BJ (cell line): ENCODE measurements at regions of chr9 and their contacts with region 1.

Region 1: GRCh38 chr9:125241863-125242739 is 958 bp upstream of the HSPA5 start:
- DNase-seq: no peak
- H3K4me3 ChIP-seq: peak overlapping the region; percentile 52
- H3K27me3 ChIP-seq: no peaks in the 10 kb centered on the region
- CTCF ChIP-seq: no peak

Region 2: DNA sequence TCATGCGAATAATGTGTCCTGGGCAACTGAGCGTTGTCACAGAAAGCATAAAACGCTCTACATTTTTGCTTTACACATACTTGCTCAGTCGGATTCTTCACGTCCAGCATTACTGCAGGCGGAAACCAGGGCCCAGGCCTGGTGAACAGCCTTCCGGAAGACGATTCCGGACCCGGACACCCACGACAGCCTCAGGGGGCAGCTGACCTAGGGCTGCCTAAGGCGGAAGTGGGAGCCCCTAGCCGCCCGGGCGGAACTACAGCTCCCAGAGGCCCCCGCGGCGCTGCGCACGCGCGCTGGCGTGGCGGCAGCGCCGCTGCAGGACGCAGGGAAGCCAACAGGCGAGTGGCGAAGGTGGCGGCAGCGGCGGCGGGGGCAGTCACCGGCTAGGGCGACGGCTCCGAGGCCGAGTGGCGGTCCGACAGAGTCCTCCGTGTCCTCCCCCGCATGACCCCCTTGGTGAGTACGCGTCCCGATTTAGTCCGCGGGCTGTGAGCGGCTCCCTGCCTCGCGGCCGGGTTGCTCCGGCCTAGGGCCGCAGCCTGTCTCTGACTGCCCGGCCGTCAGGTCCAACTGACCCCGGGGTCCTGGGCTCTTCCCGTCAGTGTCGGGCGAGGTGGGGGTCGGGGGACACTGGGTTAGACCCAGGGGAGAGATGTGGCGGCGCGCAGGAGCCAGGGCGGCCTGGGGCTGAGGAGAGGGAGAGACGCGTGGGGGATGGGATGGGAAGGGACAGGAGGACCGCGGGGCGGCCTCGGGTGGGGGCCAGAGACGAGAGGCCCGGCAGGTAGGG is 19.6 kb after region 1 on chr9 and contains the start of gene GAPVD1:
- CTCF ChIA-PET with region 1: interaction called, 20 read pairs
- POLR2A ChIA-PET with region 1: interaction called, 3 read pairs
- DNase-seq: peak; percentile 50
- H3K4me3 ChIP-seq: peak within 1 kb of the TSS; percentile 84
- H3K27me3 ChIP-seq: no peaks in the 10 kb centered on the region
- CTCF ChIP-seq: peak; percentile 20; the same call in 1 of the 2 replicates
- polyA plus RNA-seq, gene GAPVD1: 11.6 and 15.8 TPM in 2 replicates

Region 3: DNA sequence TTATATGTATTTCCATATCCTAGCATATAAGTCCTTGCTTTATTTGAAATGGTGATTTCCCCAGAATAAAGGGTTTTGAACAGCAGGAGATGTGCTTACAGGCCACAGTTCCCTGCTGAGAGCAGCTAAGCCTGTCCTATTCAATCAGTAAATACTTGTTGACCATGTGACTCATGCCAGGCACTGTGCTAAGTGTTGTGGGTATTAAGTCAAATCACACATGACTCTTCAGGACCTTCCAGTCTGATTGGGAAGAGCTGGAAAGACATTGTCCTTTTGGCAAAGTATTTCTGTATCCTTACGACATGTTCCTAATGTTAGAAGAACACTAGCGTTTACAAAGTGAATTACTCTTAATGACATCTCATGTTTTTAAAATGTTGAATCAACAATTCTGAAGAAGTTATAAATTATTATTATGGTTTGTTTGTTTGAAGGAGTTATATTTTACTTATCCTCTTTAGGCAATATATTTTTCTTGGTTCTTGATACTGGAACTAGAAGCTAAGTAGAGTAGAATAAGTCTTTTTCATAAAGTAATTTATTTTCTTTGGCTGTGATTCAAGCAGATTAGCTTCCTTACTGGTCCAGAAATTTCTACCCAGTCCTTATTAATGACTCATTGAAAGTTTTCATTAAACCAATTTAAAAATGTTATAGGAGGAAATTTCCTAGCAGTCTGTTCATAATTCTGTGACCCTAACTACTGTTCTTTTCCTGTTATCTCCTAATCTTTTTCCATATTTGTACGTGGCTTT is 101.6 kb after region 1 on chr9:
- CTCF ChIA-PET with region 1: no interaction called
- POLR2A ChIA-PET with region 1: interaction called, 16 read pairs
- DNase-seq: no peak
- H3K4me3 ChIP-seq: no peak overlapping the region
- H3K27me3 ChIP-seq: no peaks in the 10 kb centered on the region
- CTCF ChIP-seq: no peak